ENCODE measurements at regions of chr6 and their contacts with region 1.

Region 1: GRCh38 chr6:39610221-39610620 is 115.0 kb downstream of the KIF6 start:
- DNase-seq: no peak
- ATAC-seq: no peak
- H3K4me3 ChIP-seq: no peak overlapping the region
- H3K27ac ChIP-seq: no peak overlapping the region
- H3K4me1 ChIP-seq: no peaks in the 10 kb centered on the region
- H3K27me3 ChIP-seq: no peaks in the 10 kb centered on the region
- CTCF ChIP-seq: no peak
- EP300 ChIP-seq: no peak
- POLR2A ChIP-seq: no peak
- RAD21 ChIP-seq: no peak

Region 2: DNA sequence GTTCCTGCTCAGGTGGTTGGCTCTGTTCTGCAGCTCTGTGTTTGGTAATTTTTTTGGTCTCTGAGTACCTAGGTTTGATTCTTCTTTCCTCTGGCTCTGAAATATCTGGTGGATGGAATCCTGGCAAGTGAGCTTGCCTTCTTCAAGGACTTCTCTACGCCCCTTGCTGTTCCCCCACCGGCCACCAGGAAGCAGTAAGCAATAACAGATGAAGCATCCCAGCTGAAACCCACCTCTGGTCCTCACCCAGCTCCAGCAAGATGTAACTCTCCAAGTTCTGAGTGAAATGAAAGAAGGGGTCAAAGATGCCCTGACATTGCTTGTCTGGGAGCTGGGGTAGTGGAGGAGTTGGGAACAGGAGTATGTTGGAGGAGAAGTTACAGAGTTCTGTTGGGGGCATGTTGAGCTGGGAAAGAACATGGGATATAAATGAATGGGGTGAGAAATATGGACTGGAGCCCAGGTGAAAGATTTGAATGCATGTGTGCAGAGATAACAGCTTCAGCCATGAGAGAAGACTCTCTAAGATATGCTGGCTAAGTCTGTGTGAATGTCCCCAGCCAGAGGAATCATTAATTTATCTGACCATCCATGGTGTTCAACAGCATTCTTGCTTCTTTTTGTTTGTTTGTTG is 613.0 kb before region 1 on chr6:
- CTCF ChIA-PET with region 1: no interaction called
- POLR2A ChIA-PET with region 1: no interaction called
- RAD21 ChIA-PET with region 1: no interaction called
- SMC1A ChIA-PET with region 1: no interaction called
- in situ Hi-C with region 1: no loop called
- intact Hi-C with region 1: no loop called
- DNase-seq: no peak
- ATAC-seq: peak; percentile 51
- H3K4me3 ChIP-seq: no peak overlapping the region
- H3K27ac ChIP-seq: no peak overlapping the region
- H3K4me1 ChIP-seq: no peaks in the 10 kb centered on the region
- H3K27me3 ChIP-seq: no peaks in the 10 kb centered on the region
- CTCF ChIP-seq: peak; percentile 64 to 68 (median 64)
- EP300 ChIP-seq: no peak
- POLR2A ChIP-seq: no peak
- RAD21 ChIP-seq: peak; percentile 70

Region 3: DNA sequence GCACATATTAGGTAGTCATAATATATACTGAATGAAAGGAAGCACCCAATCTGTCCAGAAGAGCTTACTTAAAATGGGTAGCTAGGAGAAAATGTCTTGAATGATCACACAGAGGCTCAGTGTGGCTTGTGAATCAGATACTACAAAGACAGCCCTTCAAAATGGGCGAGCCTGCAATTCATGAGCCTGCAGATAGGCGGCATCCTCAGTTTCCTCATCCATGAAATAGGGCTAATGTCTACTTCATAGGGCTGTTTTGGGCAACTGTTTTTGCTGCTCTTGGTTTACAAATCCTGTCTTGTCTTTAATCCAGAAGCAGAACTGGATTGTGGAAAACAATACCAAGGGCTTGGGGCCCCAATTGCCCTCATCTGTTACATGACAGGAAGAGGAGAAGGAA is 158.4 kb before region 1 on chr6:
- CTCF ChIA-PET with region 1: interaction called, 7 read pairs
- POLR2A ChIA-PET with region 1: no interaction called
- RAD21 ChIA-PET with region 1: interaction called, 6 read pairs
- SMC1A ChIA-PET with region 1: interaction called, 9 read pairs
- in situ Hi-C with region 1: no loop called
- intact Hi-C with region 1: loop called (anchors 5 kb)
- DNase-seq: no peak
- ATAC-seq: peak; percentile 76
- H3K4me3 ChIP-seq: no peak overlapping the region
- H3K27ac ChIP-seq: no peak overlapping the region
- H3K4me1 ChIP-seq: no peaks in the 10 kb centered on the region
- H3K27me3 ChIP-seq: no peaks in the 10 kb centered on the region
- CTCF ChIP-seq: peak; percentile 40 to 66 (median 60)
- EP300 ChIP-seq: no peak
- POLR2A ChIP-seq: no peak
- RAD21 ChIP-seq: peak; percentile 24; the same call in 1 of the 2 replicates

Region 4: GRCh38 chr6:39530201-39530759 is 79.9 kb before region 1 on chr6:
- CTCF ChIA-PET with region 1: no interaction called
- POLR2A ChIA-PET with region 1: no interaction called
- RAD21 ChIA-PET with region 1: no interaction called
- SMC1A ChIA-PET with region 1: interaction called, 19 read pairs
- in situ Hi-C with region 1: no loop called
- intact Hi-C with region 1: loop called (anchors 2 kb)
- DNase-seq: peak; percentile 94
- ATAC-seq: peak; percentile 97
- H3K4me3 ChIP-seq: 0 out of 2 replicates have a peak overlapping the region, but pooled peaks have one; percentile 9
- H3K27ac ChIP-seq: peak overlapping the region; percentile 44; the same call in 1 of the 2 replicates
- H3K4me1 ChIP-seq: peaks cover 9% of the 10 kb centered on the region
- H3K27me3 ChIP-seq: no peaks in the 10 kb centered on the region
- CTCF ChIP-seq: no peak
- EP300 ChIP-seq: peak; percentile 84 to 94
- POLR2A ChIP-seq: no peak
- RAD21 ChIP-seq: no peak

Region 5: GRCh38 chr6:39623750-39624149 is 13.5 kb after region 1 on chr6:
- CTCF ChIA-PET with region 1: interaction called, 8 read pairs
- POLR2A ChIA-PET with region 1: no interaction called
- RAD21 ChIA-PET with region 1: interaction called, 3 read pairs
- SMC1A ChIA-PET with region 1: interaction called, 10 read pairs
- in situ Hi-C with region 1: no loop called
- intact Hi-C with region 1: no loop called
- DNase-seq: no peak
- ATAC-seq: peak; percentile 13; the same call in 1 of the 3 replicates
- H3K4me3 ChIP-seq: no peak overlapping the region
- H3K27ac ChIP-seq: no peak overlapping the region
- H3K4me1 ChIP-seq: no peaks in the 10 kb centered on the region
- H3K27me3 ChIP-seq: no peaks in the 10 kb centered on the region; a peak in 1 of 4 replicates
- CTCF ChIP-seq: no peak
- EP300 ChIP-seq: no peak
- POLR2A ChIP-seq: no peak
- RAD21 ChIP-seq: no peak

Region 6: DNA sequence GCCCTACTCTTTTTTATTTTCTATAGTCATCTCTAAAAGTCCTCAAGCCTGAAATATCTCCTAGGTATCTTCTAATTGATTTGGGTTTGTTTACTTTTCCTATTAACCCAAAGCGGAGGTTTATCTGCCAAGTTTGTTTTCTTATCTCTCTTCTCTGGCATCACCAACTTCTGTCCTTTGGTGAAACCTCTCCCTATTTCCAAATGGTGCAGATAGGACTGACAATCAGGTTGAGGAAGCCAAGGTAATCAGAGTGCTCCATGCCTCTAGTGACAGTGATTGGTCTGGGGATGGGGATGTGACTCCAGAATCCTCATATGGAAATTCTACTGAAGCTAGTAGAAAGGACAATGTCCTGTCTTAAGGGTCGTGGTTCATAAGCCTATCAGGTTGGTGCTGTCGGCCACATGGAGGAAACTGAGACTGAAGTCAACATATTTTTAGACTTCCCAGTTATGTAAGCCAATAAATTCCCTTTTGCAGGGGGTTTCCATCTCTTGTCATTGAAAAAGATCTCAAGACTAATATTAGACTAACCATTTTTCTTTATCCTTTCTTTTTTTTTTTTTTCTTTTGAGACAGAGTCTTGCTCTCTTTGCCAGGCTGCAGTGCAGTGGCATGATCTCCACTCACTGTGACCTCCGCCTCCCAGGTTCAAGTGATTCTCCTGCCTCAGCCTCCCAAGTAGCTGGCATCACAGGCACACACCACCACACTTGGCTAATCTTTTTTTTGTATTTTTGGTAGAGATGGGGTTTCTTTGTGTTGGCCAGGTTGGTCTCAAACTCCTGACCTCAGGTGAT is 87.0 kb after region 1 on chr6:
- CTCF ChIA-PET with region 1: no interaction called
- POLR2A ChIA-PET with region 1: interaction called, 3 read pairs
- RAD21 ChIA-PET with region 1: interaction called, 3 read pairs
- SMC1A ChIA-PET with region 1: interaction called, 10 read pairs
- in situ Hi-C with region 1: no loop called
- intact Hi-C with region 1: no loop called
- DNase-seq: peak; percentile 38
- ATAC-seq: peak; percentile 87
- H3K4me3 ChIP-seq: no peak overlapping the region
- H3K27ac ChIP-seq: peak overlapping the region; percentile 25
- H3K4me1 ChIP-seq: peaks cover 7% of the 10 kb centered on the region; the same call in 1 of the 2 replicates
- H3K27me3 ChIP-seq: no peaks in the 10 kb centered on the region
- CTCF ChIP-seq: no peak
- EP300 ChIP-seq: no peak
- POLR2A ChIP-seq: no peak
- RAD21 ChIP-seq: no peak

Measured in GM12878 (cell line).